ENCODE measurements at regions of chr12 and their contacts with region 1.

Region 1: GRCh38 chr12:5648692-5649359 is 216.9 kb downstream of the NTF3 start:
- DNase-seq: peak; percentile 62 to 66
- H3K4me3 ChIP-seq: no peak overlapping the region
- H3K4me3 Mint-ChIP-seq: no peak overlapping the region
- H3K27ac Mint-ChIP-seq: no peak overlapping the region
- H3K4me1 ChIP-seq: no peaks in the 10 kb centered on the region
- H3K4me1 Mint-ChIP-seq: peaks cover 8% of the 10 kb centered on the region
- H3K27me3 ChIP-seq: no peaks in the 10 kb centered on the region
- H3K27me3 Mint-ChIP-seq: no peaks in the 10 kb centered on the region
- CTCF ChIP-seq: peak; percentile 81 to 91

Region 2: DNA sequence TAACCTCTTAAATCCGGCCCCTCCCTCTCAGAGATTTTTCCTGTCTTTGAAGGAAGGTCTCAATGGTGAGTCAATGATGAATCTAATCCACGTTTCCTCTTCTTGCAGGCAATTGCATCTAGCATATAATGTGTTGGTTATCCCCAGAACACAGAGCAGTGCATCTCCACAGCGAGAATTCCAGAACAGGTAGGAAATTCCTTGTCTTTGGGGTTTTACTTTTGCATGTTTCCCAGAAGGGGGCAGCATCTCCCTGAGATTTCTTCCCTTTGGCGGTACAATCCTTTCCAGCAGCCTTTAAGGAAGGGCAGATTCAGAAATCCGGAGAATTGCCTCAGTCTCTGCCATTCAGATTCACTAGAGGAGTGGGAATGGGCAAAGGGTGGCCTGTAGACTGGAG is 477.1 kb before region 1 on chr12:
- CTCF ChIA-PET with region 1: interaction called, 4 read pairs
- POLR2A ChIA-PET with region 1: no interaction called
- intact Hi-C with region 1: loop called (anchors 1 kb)
- DNase-seq: peak; percentile 62 to 81
- H3K4me3 ChIP-seq: no peak overlapping the region
- H3K4me3 Mint-ChIP-seq: no peak overlapping the region
- H3K27ac Mint-ChIP-seq: no peak overlapping the region
- H3K4me1 ChIP-seq: no peaks in the 10 kb centered on the region
- H3K4me1 Mint-ChIP-seq: no peaks in the 10 kb centered on the region
- H3K27me3 ChIP-seq: no peaks in the 10 kb centered on the region; the same call in 1 of the 2 replicates
- H3K27me3 Mint-ChIP-seq: peaks cover 8% of the 10 kb centered on the region
- CTCF ChIP-seq: peak; percentile 81 to 87

Region 3: DNA sequence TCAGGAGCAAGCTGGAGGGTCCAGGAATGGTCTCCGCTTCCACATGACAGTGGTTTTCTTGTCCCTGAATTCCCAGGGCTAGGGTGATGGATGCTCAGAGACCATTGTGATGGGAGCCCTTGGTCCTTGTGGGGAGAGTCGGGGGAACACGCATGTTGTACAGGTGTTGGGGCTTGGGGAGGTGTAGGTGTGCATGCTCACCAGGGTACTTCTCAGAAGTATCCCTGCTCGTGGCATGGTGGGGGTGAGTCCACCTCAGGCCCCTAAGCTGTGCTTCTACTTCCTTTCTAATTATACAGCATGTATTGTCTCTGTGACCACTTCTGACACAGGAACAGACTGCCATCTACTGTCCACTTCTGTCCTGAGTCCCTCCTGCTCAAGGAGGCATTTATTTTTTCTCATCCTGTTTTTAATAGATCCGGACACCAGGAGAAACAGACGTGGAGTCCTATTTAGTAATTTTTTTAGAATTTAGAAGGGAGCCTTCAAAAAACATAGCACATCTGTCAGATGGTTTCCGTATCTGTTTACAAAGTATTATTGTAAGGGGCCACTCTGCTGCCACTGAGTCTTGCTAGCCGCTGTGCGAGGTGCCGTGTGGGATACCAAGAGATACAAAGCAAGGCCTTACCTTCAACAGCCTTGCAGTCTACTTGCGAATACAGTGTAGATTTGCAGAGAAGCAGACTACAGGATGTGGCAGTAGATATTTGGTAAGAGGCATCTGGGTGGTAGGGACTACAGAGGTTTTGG is 206.4 kb before region 1 on chr12:
- CTCF ChIA-PET with region 1: no interaction called
- POLR2A ChIA-PET with region 1: no interaction called
- intact Hi-C with region 1: loop called (anchors 1 kb)
- DNase-seq: peak; percentile 65 to 76
- H3K4me3 ChIP-seq: no peak overlapping the region
- H3K4me3 Mint-ChIP-seq: no peak overlapping the region
- H3K27ac Mint-ChIP-seq: no peak overlapping the region
- H3K4me1 ChIP-seq: no peaks in the 10 kb centered on the region
- H3K4me1 Mint-ChIP-seq: peaks cover 7% of the 10 kb centered on the region
- H3K27me3 ChIP-seq: no peaks in the 10 kb centered on the region
- H3K27me3 Mint-ChIP-seq: no peaks in the 10 kb centered on the region
- CTCF ChIP-seq: peak; percentile 82 to 90

Region 4: GRCh38 chr12:5493018-5493417 is 155.8 kb before region 1 on chr12:
- CTCF ChIA-PET with region 1: interaction called, 15 read pairs
- POLR2A ChIA-PET with region 1: no interaction called
- intact Hi-C with region 1: loop called (anchors 1 kb)
- DNase-seq: peak; percentile 68 to 70
- H3K4me3 ChIP-seq: no peak overlapping the region
- H3K4me3 Mint-ChIP-seq: no peak overlapping the region
- H3K27ac Mint-ChIP-seq: peak overlapping the region; percentile 18
- H3K4me1 ChIP-seq: peaks cover 25% of the 10 kb centered on the region
- H3K4me1 Mint-ChIP-seq: peaks cover 24% of the 10 kb centered on the region
- H3K27me3 ChIP-seq: no peaks in the 10 kb centered on the region
- H3K27me3 Mint-ChIP-seq: no peaks in the 10 kb centered on the region
- CTCF ChIP-seq: peak; percentile 60 to 66

Region 5: GRCh38 chr12:5624486-5625272 is 24.1 kb before region 1 on chr12:
- CTCF ChIA-PET with region 1: no interaction called
- POLR2A ChIA-PET with region 1: no interaction called
- intact Hi-C with region 1: no loop called
- DNase-seq: no peak
- H3K4me3 ChIP-seq: no peak overlapping the region
- H3K4me3 Mint-ChIP-seq: no peak overlapping the region
- H3K27ac Mint-ChIP-seq: no peak overlapping the region
- H3K4me1 ChIP-seq: no peaks in the 10 kb centered on the region
- H3K4me1 Mint-ChIP-seq: no peaks in the 10 kb centered on the region
- H3K27me3 ChIP-seq: no peaks in the 10 kb centered on the region
- H3K27me3 Mint-ChIP-seq: peaks cover 3% of the 10 kb centered on the region
- CTCF ChIP-seq: no peak

Region 6: DNA sequence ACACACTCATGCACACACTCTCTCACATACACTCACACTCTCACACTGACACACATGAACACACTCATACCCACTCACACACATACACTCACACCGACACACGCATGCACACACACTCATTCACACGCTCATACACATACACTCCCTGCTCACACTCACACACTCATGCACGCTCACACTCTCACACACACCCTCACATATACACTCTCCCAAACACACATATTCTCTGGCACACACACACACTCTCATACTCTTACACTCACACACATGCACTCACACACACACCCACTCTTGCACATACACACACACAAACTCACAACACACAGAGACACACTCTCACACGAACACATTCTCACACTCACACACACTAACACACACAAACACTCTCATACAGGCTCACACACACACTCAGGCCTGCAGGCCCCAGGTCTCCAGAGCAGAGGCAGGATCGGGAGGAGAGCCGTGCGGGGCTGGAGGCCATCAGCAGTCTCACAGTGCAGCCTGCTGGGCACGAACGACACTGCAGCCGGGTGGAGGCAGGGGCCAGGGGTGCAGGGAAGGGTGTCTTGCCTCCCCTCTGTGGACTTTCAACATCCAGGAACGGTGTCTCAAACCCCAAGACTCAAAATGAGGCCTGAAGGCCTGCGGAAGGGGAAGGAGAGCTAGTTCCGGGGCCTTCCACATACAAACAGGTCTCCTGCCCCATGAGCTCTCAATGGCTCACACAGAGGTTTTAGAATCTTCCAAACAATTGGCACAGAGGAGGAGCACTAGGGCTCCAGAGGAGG is 147.5 kb after region 1 on chr12:
- CTCF ChIA-PET with region 1: interaction called, 3 read pairs
- POLR2A ChIA-PET with region 1: no interaction called
- intact Hi-C with region 1: loop called (anchors 5 kb)
- DNase-seq: peak; percentile 69 to 83
- H3K4me3 ChIP-seq: no peak overlapping the region
- H3K4me3 Mint-ChIP-seq: no peak overlapping the region
- H3K27ac Mint-ChIP-seq: no peak overlapping the region
- H3K4me1 ChIP-seq: no peaks in the 10 kb centered on the region
- H3K4me1 Mint-ChIP-seq: no peaks in the 10 kb centered on the region
- H3K27me3 ChIP-seq: no peaks in the 10 kb centered on the region
- H3K27me3 Mint-ChIP-seq: peaks cover 11% of the 10 kb centered on the region
- CTCF ChIP-seq: peak; percentile 93 to 96